Thyroid gland (tissue), 4 donors: ENCODE measurements at regions of chr4 and their contacts with region 1.

Region 1: DNA sequence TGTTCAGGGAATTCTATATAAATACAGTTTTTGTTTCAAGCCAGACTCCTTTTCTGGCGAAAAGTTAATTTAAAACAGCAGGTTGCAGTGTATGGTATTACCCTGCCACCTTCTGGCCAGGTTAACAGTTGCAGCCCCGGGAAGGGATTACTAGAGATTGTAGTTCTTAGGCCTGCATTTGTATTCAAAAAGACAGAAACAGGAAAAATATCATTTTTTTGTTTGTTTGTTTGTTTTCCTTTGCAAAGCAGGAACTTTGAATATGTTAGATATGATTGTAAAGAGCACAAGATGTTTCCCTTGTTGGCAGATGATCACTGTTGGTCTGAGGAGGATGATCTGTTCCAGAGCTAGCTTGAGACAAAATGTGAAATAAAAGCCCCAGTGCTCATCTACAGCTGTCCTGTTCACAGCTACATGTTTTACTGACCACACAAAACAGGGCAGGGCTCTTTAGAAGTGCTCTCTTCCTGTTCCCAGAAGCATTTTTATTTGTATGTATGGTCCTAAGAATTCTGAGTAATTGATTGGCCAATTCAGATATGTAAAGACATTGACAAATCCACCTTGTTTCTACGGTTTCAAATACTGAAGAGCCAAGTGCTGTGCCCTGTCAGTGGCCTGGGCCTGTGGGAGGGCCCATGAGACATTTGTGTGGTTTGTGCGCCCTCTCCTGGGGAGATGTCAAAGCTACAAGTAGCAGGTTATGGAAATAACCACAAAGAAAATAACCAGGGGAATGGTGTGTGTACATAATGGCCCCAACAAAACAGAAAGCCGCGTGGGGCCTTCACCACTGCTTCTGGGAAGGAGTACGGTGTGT is 57.9 kb downstream of the CLDN22 start:
- DNase-seq: peak; percentile 82 to 88
- H3K4me3 ChIP-seq: no peak overlapping the region
- H3K27ac ChIP-seq: peak overlapping the region in 2 of 3 donors; percentile 55
- H3K4me1 ChIP-seq: peaks cover 5 to 11% of the 10 kb centered on the region in 2 donors
- H3K27me3 ChIP-seq: no peaks in the 10 kb centered on the region
- CTCF ChIP-seq: peak; percentile 55 to 90 (median 76)
- POLR2A ChIP-seq: no peak

Region 2: GRCh38 chr4:182938205-182938645 is 323.9 kb before region 1 on chr4:
- intact Hi-C with region 1: loop called (anchors 5 kb)
- DNase-seq: peak; percentile 71 to 80
- H3K4me3 ChIP-seq: no peak overlapping the region
- H3K27ac ChIP-seq: no peak overlapping the region
- H3K4me1 ChIP-seq: no peaks in the 10 kb centered on the region
- H3K27me3 ChIP-seq: no peaks in the 10 kb centered on the region
- CTCF ChIP-seq: peak; percentile 60 to 91 (median 86)
- POLR2A ChIP-seq: no peak